ENCODE measurements at regions of chr10 and their contacts with region 1.

Region 1: GRCh38 chr10:127402611-127403409 is 146.3 kb upstream of the NPS start:
- DNase-seq: no peak
- H3K4me3 ChIP-seq: no peak overlapping the region
- H3K27ac ChIP-seq: no peak overlapping the region
- H3K4me1 ChIP-seq: no peaks in the 10 kb centered on the region
- H3K27me3 ChIP-seq: no peaks in the 10 kb centered on the region
- CTCF ChIP-seq: no peak
- POLR2A ChIP-seq: no peak

Region 2: DNA sequence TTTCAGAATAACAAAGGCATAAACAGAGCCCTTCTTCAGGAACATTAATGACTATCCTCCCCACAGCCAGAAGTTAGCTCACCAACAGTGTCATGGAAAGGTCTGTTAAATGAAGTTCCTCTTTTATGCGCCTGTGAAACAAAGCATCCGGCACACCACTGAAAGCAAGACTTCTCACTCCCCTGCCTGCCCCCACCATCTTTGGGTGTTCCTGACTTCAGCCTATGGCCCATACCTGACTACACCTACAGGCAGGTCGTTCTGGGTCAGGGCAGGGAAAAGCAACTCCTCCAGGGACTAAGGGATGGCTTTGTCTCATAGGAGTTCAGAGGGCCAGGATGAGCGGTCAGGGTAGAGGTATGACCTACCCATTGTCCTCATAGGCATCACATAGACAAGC is 1301.0 kb before region 1 on chr10:
- intact Hi-C with region 1: loop called (anchors 5 kb)
- DNase-seq: no peak
- H3K4me3 ChIP-seq: no peak overlapping the region
- H3K27ac ChIP-seq: peak overlapping the region in 1 of 2 donors; percentile 12
- H3K4me1 ChIP-seq: no peaks in the 10 kb centered on the region
- H3K27me3 ChIP-seq: no peaks in the 10 kb centered on the region
- CTCF ChIP-seq: no peak
- POLR2A ChIP-seq: no peak

Region 3: GRCh38 chr10:126663328-126663727 is 739.5 kb before region 1 on chr10:
- intact Hi-C with region 1: no loop called
- DNase-seq: peak in 1 of 2 donors; percentile 53
- H3K4me3 ChIP-seq: no peak overlapping the region
- H3K27ac ChIP-seq: peak overlapping the region; percentile 68 to 79
- H3K4me1 ChIP-seq: no peaks in the 10 kb centered on the region
- H3K27me3 ChIP-seq: no peaks in the 10 kb centered on the region
- CTCF ChIP-seq: no peak
- POLR2A ChIP-seq: no peak